ENCODE measurements at regions of chr2 and their contacts with region 1.

Region 1: DNA sequence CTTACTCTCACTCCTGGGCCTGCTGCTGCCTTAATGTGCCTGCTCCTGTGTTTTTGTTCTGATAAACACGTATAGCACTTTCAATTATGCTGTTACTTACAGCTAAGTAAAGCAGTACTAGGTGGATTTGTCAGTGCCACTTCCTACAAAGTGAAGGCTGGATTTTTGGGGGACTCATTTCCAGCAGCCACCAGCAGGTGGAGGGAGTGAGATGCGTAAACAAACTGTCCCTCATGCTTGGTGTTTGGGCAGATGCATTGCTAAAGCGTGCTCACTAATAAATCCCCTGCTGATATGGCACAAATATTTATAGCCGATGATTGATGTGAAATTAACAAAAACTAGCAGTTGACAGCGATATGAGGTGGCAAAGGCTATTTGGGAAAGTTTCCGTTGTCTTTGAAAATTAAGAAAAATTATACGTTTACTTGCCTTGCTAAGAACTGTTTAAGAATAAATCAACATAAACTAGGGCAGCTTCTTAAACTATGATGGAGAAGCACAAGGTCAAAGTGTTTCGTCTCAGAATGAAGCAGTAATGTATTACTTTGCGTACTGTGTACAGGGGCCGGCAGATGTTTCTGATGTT is 101.7 kb downstream of the AGAP1 start:
- DNase-seq: peak; percentile 73 to 94 (median 80)
- H3K4me3 ChIP-seq: peak overlapping the region in 1 of 59 donors; percentile 4
- H3K27ac ChIP-seq: peak overlapping the region in 46 of 59 donors; percentile 5 to 82 (median 62)
- H3K27me3 ChIP-seq: no peaks in the 10 kb centered on the region
- CTCF ChIP-seq: peak; percentile 80 to 99 (median 94)

Region 2: GRCh38 chr2:235384624-235385023 is 210.9 kb before region 1 on chr2:
- intact Hi-C with region 1: loop called in 1 of 2 experiments (anchors 5 kb)
- DNase-seq: peak; percentile 35 to 91 (median 86)
- H3K4me3 ChIP-seq: peak overlapping the region in 32 of 59 donors; percentile 2 to 48 (median 22)
- H3K27ac ChIP-seq: peak overlapping the region in 58 of 59 donors; percentile 5 to 92 (median 84)
- H3K27me3 ChIP-seq: peaks cover 0 to 8% (median 0%) of the 10 kb centered on the region in 45 donors
- CTCF ChIP-seq: peak in 17 of 56 donors; percentile 10 to 49 (median 20)

Region 3: DNA sequence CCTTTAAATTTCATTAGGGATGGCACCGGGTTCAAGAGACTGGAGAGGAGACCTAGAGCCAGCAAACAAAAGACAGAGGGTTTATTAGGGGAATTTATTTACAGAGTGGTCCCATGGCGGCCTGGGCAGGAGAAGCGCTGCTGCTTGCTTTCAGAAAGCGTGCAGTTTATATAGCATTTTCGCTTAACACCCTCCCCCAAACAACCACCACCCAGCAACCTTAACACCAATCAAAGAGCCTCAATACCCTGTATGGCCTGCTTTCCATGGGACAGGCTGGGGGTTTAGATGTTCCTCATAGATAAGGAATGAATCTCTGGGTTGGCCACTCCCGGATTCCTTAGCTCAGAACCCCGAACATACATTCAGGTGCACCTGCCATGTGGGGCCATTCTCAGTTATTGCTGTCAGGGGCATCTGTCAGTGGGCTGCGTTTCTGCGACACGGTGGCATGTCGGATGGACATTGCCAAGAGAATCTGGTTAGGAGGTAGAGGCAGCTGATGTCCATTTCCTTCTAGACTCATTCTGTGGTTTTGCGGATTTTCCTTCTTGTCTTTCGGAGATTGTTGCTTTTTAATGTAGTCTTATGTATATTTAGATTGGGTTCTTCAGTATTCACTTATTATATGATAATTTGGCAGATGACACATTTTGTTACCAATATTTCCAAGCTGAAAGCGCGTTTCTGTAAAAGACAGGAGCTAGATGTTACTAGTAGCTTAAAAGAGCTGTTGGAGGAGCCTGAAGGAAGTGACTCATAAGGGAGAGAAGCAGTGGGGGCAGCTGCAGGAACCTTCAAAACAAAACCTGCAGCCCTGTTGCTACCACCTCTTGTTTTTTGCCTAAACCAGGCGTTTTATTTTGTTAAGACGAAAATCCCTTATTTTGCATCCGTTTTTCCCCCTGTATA is 94.5 kb before region 1 on chr2:
- intact Hi-C with region 1: loop called (anchors 5 kb)
- DNase-seq: no peak
- H3K4me3 ChIP-seq: peak overlapping the region in 45 of 59 donors; percentile 5 to 53 (median 26)
- H3K27ac ChIP-seq: peak overlapping the region in 24 of 59 donors; percentile 5 to 77 (median 46)
- H3K27me3 ChIP-seq: no peaks in the 10 kb centered on the region
- CTCF ChIP-seq: no peak

Region 4: DNA sequence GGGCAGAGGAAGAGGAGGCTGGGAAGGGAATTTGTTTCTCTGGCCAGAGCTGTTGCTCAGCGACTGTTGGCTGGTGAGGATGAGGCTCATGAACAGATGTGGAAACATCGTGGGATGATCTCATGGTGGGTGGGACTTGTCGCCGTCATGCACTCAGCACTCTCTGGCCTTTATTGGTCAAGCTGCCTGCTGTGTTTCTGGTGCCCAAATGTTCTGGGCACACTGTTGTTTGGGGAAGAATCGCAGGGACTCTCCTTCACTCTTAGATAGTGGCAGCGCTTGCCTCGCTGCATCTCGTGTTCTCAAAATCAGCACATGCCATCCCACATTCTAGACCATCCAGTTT is 43.9 kb after region 1 on chr2:
- intact Hi-C with region 1: loop called in 1 of 2 experiments (anchors 1 kb)
- DNase-seq: peak; percentile 33 to 97 (median 92)
- H3K4me3 ChIP-seq: peak overlapping the region in 34 of 59 donors; percentile 4 to 57 (median 28)
- H3K27ac ChIP-seq: peak overlapping the region; percentile 74 to 99 (median 96)
- H3K27me3 ChIP-seq: no peaks in the 10 kb centered on the region
- CTCF ChIP-seq: peak in 1 of 56 donors; percentile 5

Region 5: DNA sequence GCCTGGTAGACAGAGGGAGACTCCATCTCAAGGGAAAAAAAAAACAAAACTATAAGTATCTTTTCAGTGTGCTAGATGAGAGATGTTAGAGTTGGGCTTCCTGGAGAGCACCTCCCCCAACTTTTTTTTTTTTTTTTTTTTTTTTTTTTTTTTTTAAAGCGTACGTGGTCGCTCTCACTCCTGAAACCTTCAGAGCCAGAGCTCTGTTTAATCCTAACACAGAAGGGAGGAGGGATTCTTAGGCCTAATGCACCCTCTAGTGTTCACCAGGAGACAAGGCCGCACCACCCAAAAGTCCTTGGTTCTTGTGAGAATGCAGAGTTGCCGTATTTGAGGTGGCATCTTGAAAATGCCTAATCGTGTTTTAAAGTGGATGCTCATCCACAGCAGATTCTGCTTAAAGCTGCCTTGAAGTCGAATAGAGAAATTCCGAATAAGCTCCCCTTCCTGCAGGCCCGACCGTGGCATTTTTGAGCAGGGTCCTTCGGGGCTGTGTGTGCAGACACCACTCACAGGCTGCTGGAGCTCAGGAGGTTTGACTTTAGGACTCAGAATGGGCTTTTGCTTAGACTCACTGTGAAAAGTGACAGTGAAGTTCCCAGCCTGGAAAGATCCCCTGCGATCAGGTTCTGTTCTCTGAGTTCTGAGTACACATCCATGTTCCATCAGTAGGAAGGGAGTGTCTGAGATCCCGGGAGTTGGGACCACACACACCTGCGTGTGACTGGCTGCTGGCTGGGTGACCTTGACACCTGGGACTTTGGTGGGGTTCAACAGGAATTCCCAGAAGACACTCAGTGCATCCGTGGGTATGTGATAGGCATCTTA is 151.0 kb after region 1 on chr2:
- intact Hi-C with region 1: loop called (anchors 1 to 2 kb)
- DNase-seq: peak in 5 of 10 donors; percentile 62 to 84 (median 76)
- H3K4me3 ChIP-seq: no peak overlapping the region
- H3K27ac ChIP-seq: peak overlapping the region in 25 of 59 donors; percentile 2 to 72 (median 48)
- H3K27me3 ChIP-seq: no peaks in the 10 kb centered on the region
- CTCF ChIP-seq: peak; percentile 47 to 93 (median 85)

Region 6: DNA sequence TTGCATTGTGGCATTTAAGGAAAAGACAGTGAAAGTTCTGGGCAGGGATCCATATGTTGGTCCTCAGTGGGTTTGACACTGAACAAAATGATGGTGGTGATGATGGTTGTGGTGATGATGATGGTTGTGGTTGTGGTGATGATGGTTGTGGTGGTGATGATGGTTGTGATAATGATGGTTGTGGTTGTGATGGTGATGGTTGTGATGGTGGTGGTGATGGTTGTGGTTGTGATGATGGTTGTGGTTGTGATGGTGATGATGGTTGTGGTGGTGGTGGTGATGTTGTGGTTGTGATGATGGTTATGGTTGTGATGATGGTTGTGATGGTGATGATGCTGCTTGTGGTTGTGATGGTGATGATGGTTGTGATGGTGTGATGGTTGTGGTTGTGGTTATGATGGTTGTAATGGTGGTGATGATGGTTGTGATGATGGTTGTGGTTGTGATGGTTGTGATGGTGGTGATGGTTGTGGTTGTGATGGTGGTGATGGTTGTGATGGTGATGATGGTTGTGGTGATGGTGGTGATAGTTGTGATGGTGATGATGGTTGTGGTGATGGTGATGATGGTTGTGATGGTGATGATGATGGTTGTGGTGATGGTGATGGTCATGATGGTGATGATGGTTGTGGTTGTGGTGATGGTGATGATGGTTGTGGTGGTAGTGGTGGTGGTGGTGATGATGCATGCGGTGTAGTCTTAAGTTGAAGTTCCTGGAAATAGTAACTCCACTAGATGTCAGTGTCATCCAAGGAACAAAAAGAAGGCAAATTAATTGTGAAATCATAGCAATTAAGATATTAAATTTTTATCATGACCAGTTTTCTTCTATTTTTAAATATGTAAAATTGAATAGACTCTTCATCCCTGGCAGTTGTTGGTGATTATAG is 207.3 kb after region 1 on chr2:
- intact Hi-C with region 1: no loop called
- DNase-seq: no peak
- H3K4me3 ChIP-seq: no peak overlapping the region
- H3K27ac ChIP-seq: no peak overlapping the region
- H3K27me3 ChIP-seq: no peaks in the 10 kb centered on the region
- CTCF ChIP-seq: peak in 12 of 56 donors; percentile 6 to 43 (median 22)